Right ventricle myocardium superior (tissue), 1 donor: ENCODE measurements at regions of chr4 and their contacts with region 1.

Region 1: DNA sequence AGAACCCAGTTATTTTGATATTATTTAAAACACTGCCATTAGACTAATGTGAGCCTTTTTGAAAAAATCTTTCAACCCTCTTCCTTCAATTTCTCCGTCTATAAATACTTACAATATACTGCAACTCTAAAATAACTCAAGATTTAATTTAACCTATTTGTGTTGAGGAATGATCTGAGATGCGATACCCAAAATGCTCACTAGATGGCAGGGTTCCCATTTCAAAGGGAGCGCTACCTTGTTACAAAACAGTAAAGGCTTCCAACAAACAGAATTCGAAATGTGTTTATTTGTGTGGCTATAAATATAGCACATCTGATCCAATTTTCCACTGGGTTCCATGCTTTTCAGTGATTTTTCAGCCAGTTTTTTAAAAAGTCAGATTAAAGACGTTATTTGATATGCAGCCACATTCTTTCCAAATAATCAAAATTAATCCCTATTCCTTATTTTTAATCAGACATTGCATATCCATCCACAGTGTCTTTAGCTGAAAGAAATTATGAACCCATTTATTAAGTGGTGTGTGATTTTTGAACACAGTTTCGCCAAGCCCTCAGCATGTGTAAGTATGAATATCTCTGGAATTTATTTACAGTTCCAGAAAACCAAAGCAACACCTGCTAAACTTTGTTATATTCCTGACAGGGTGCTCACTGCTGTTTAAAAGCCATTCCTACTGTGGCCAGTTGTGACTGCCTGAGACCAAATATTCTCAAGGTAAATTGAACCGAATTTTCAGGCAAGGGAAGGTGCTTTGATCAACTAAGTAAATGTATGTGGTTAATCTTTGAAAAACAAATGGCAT is 668.0 kb upstream of the LCORL start:
- DNase-seq: no peak
- ATAC-seq: peak; percentile 85

Region 2: GRCh38 chr4:18935659-18936345 is 246.3 kb after region 1 on chr4:
- intact Hi-C with region 1: loop called (anchors 5 kb)
- DNase-seq: no peak
- ATAC-seq: no peak

Region 3: GRCh38 chr4:20684852-20685763 is 1995.6 kb after region 1 on chr4:
- intact Hi-C with region 1: loop called (anchors 10 kb)
- DNase-seq: no peak
- ATAC-seq: no peak